ENCODE measurements at regions of chr21 and their contacts with region 1.

Region 1: GRCh38 chr21:38805328-38806152 is at the start of gene ETS2:
- DNase-seq: peak; percentile 92
- ATAC-seq: peak; percentile 85
- H3K4me3 ChIP-seq: peak within 1 kb of the TSS; percentile 95
- H3K27ac ChIP-seq: peak within 1 kb of the TSS; percentile 91
- H3K4me1 ChIP-seq: peaks cover 28% of the 10 kb centered on the region
- H3K27me3 ChIP-seq: no peaks in the 10 kb centered on the region
- CTCF ChIP-seq: no peak
- POLR2A ChIP-seq: peak; percentile 98
- RAD21 ChIP-seq: no peak; the same call in none of the 2 replicates
- total RNA-seq, gene ETS2: 20.6 and 21.7 TPM in 2 replicates

Region 2: DNA sequence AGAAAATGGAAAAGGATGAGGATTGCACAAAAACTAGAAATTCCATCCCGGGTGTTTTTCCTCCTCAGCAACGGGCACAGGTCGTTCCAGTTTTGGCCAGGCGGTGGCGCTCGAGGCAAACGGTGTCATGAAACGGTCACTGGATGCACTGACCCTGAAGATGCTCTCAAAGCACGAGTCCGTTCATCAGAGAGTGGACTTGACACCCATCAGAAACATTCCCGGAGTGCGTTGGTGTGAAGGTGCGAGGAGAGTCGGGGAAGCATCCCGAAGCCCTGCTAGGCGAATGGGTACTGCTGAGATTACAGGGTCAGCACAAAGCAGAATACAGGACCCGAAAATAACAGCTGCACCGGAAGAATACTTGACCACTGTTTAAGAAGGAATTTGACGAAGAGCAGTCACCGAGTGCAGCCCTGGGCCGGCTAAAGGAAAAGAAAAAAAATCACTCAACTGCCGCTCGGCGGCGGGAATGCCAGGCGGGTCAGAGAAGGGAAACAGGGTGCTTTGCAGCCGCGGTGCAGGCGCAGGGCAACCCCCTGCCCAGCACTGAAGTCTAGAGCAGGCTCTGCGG is 71.5 kb before region 1 on chr21:
- CTCF ChIA-PET with region 1: interaction called, 4 read pairs
- POLR2A ChIA-PET with region 1: no interaction called
- dilution Hi-C with region 1: no loop called
- in situ Hi-C with region 1: no loop called
- intact Hi-C with region 1: loop called (anchors 1 kb)
- DNase-seq: peak; percentile 80
- ATAC-seq: peak; percentile 99
- H3K4me3 ChIP-seq: peak overlapping the region; percentile 43
- H3K27ac ChIP-seq: peak overlapping the region; percentile 67
- H3K4me1 ChIP-seq: no peaks in the 10 kb centered on the region
- H3K27me3 ChIP-seq: peaks cover 5% of the 10 kb centered on the region; the same call in 1 of the 2 replicates
- CTCF ChIP-seq: peak; percentile 97
- POLR2A ChIP-seq: no peak
- RAD21 ChIP-seq: peak; percentile 97

Region 3: GRCh38 chr21:38773099-38774061 is 32.2 kb before region 1 on chr21:
- CTCF ChIA-PET with region 1: interaction called, 3 read pairs
- POLR2A ChIA-PET with region 1: interaction called, 8 read pairs
- dilution Hi-C with region 1: no loop called
- in situ Hi-C with region 1: no loop called
- intact Hi-C with region 1: loop called (anchors 1 kb)
- DNase-seq: peak; percentile 99
- ATAC-seq: peak; percentile 77
- H3K4me3 ChIP-seq: no peak overlapping the region
- H3K27ac ChIP-seq: peak overlapping the region; percentile 92
- H3K4me1 ChIP-seq: peaks cover 28% of the 10 kb centered on the region
- H3K27me3 ChIP-seq: no peaks in the 10 kb centered on the region
- CTCF ChIP-seq: no peak
- POLR2A ChIP-seq: 0 out of 2 replicates have a peak, but pooled peaks have one; percentile 7
- RAD21 ChIP-seq: peak; percentile 11; the same call in 1 of the 2 replicates

Region 4: DNA sequence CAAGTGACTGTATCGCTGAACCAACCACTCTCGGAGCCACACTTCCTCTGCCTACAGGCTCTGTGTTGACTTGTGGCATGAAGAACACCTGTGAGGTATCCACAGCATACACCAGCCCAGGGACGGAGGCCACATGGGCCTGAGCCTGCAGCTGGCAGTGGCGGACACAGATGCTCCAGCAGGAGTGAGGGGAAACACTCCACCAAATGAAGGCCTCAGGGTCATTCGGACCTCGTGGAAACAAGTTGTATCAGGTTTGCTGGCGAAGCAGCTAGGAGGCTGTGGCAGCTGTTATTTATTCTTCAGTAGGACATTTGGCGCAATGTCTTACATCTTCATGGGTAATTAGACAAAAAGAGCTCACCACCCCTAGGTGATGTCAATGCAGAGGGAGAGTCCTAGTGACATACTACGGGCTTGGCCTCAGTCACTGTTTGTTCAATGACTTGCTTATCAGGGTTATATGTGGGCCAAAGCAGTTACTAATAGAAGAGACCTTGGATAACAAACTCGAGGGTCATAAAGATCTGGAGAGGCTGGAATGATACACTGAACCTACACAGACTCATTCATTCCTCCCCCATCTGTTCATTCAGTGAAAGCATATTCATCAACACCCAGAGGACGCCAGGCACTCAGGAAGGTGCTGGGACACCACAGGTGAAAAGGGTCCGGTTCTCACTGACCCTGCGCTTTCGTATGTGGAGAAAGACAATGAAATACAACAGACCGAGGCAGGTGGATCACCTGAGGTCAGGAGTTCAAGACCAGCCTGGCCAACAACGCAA is 11.4 kb before region 1 on chr21:
- CTCF ChIA-PET with region 1: no interaction called
- POLR2A ChIA-PET with region 1: no interaction called
- dilution Hi-C with region 1: no loop called
- in situ Hi-C with region 1: no loop called
- intact Hi-C with region 1: no loop called
- DNase-seq: no peak
- ATAC-seq: no peak
- H3K4me3 ChIP-seq: no peak overlapping the region
- H3K27ac ChIP-seq: no peak overlapping the region
- H3K4me1 ChIP-seq: peaks cover 5% of the 10 kb centered on the region; the same call in 1 of the 2 replicates
- H3K27me3 ChIP-seq: no peaks in the 10 kb centered on the region
- CTCF ChIP-seq: no peak
- POLR2A ChIP-seq: no peak
- RAD21 ChIP-seq: no peak

Region 5: GRCh38 chr21:38965251-38965650 is 159.7 kb after region 1 on chr21:
- CTCF ChIA-PET with region 1: no interaction called
- POLR2A ChIA-PET with region 1: interaction called, 12 read pairs
- dilution Hi-C with region 1: no loop called
- in situ Hi-C with region 1: no loop called
- intact Hi-C with region 1: no loop called
- DNase-seq: peak; percentile 51
- ATAC-seq: no peak; the same call in 1 of the 2 replicates
- H3K4me3 ChIP-seq: no peak overlapping the region
- H3K27ac ChIP-seq: peak overlapping the region; percentile 15; the same call in 1 of the 2 replicates
- H3K4me1 ChIP-seq: peaks cover 3% of the 10 kb centered on the region; the same call in 1 of the 2 replicates
- H3K27me3 ChIP-seq: no peaks in the 10 kb centered on the region
- CTCF ChIP-seq: no peak
- POLR2A ChIP-seq: no peak
- RAD21 ChIP-seq: no peak

Region 6: DNA sequence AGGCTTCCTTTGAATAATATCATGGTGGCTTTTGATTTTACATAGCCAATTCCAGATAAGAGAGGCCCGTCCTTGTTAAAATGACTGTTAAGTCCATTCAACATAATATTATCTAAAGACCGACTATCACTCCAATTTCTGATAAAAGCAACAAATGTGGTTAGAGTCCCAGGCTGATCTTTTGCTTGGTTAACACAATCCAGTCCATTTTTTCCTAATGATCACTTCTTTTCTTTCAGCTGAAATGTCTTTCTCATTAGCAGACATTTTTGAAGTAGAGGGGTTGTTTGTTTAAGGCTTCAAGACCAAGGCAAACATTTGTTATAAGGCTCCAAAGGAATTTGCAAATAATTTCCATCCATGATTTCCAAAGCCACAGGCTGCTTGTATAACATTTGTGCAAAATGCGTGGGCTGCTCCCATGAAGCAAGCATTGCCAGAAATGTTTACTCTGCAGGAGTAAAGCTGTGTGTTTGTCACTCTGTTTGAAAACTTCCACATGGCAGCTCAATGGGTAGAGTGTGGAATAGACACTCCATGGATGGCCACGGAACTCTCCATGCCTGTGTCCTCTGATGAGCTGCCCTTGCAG is 266.2 kb after region 1 on chr21:
- CTCF ChIA-PET with region 1: no interaction called
- POLR2A ChIA-PET with region 1: no interaction called
- dilution Hi-C with region 1: no loop called
- in situ Hi-C with region 1: no loop called
- intact Hi-C with region 1: loop called (anchors 5 kb)
- DNase-seq: peak; percentile 83
- ATAC-seq: peak; percentile 91
- H3K4me3 ChIP-seq: no peak overlapping the region
- H3K27ac ChIP-seq: peak overlapping the region; percentile 87; the same call in 1 of the 2 replicates
- H3K4me1 ChIP-seq: peaks cover 12% of the 10 kb centered on the region
- H3K27me3 ChIP-seq: no peaks in the 10 kb centered on the region
- CTCF ChIP-seq: no peak
- POLR2A ChIP-seq: no peak
- RAD21 ChIP-seq: no peak

Region 7: DNA sequence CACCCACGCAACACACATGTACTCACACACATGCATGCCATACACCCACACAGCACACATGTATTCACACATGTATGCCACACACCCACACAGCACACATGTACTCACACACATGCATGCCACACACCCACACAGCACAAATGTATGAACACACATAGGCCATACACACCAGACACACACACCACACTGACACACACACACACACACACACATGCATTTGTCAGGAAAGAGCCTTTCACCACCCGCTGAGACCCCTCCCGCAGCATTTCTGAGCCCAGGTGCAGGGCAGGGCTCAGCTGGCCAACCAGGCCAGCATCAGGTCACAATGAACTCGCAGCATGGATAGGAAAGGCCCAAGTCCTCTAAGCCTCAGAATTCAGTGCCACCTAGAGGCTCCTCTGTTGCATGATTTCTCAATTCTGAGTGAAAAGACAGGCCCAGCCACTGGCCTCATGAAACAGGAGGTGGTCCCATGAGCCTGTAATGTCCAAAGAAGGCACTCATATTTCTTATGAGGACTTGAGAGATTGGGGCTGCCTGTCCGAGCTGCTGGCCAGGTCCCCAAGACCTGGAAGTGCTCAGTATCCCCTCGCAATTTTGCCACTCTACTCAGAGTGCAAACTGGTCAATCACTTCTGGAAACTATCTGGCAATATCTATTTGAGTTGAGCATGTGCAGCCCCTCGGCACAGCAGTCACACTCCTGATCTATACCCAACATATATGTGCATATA is 320.4 kb after region 1 on chr21:
- CTCF ChIA-PET with region 1: no interaction called
- POLR2A ChIA-PET with region 1: no interaction called
- dilution Hi-C with region 1: no loop called
- in situ Hi-C with region 1: loop called (anchors 5 kb)
- intact Hi-C with region 1: loop called (anchors 2 kb)
- DNase-seq: peak; percentile 78
- ATAC-seq: peak; percentile 98
- H3K4me3 ChIP-seq: no peak overlapping the region
- H3K27ac ChIP-seq: peak overlapping the region; percentile 14; the same call in 1 of the 2 replicates
- H3K4me1 ChIP-seq: peaks cover 4% of the 10 kb centered on the region; the same call in 1 of the 2 replicates
- H3K27me3 ChIP-seq: no peaks in the 10 kb centered on the region; the same call in 1 of the 2 replicates
- CTCF ChIP-seq: peak; percentile 78
- POLR2A ChIP-seq: 0 out of 2 replicates have a peak, but pooled peaks have one; percentile 33
- RAD21 ChIP-seq: peak; percentile 91